A549 (cell line): ENCODE measurements at regions of chr11 and their contacts with region 1.

Region 1: DNA sequence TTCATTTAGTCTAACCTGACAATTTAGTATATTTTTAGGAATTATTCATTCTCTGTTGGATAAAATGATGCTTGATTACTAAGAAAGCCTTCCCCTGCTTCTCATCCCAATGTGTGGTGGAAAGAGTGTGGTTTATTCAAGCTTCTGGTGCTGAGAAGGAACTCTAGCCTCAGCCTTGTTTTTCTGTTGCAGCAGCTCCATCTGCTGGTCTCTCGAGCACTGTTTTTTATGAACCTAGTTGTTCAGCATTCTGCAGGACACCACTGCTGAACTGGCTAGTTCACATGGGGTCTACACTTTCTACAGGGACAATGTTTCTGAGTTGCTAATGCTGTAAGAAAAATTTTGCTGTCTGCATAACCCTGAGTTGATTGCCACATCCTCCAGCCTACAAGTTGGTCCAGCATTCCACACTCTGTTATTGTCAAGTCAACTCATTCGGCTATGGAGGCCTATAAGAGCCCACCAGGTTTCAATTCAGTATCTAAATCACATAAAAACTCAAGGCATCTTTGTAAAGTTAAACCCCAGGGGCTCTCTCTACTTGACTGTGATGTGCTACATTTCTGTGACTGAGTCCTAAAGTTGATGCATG is 14.3 kb downstream of the OR2AG2 start:
- DNase-seq: peak; percentile 35 to 58
- ATAC-seq: peak; percentile 91 to 94
- H3K4me3 ChIP-seq: no peak overlapping the region
- H3K27ac ChIP-seq: no peak overlapping the region
- H3K4me1 ChIP-seq: no peaks in the 10 kb centered on the region
- CTCF ChIP-seq: peak; percentile 62
- EP300 ChIP-seq: no peak
- POLR2A ChIP-seq: no peak
- RAD21 ChIP-seq: peak; percentile 56 to 72

Region 2: DNA sequence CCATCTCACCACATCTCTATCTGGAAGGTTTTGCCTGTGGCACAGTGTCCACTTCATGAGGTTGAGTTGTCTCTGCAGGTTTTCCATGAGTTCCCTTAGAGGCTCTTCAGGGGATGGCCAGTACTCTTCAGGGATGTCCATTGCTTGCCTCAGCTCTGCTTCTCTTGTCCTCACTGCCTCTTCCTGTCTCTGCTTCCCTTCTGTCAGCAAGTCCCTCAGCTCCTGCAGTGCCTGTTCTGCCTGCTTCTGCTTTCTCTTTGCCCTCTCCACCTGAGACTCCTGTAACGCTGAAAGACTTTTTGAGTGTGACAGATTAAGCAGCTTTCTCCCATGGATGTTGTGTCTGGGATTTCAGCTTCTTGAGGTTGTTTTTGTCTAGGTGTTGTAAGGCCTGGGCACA is 36.1 kb before region 1 on chr11:
- CTCF ChIA-PET with region 1: interaction called, 14 read pairs
- POLR2A ChIA-PET with region 1: no interaction called
- DNase-seq: no peak
- ATAC-seq: no peak
- H3K4me3 ChIP-seq: no peak overlapping the region
- H3K27ac ChIP-seq: no peak overlapping the region
- H3K4me1 ChIP-seq: no peaks in the 10 kb centered on the region
- CTCF ChIP-seq: no peak
- EP300 ChIP-seq: no peak
- POLR2A ChIP-seq: no peak
- RAD21 ChIP-seq: no peak

Region 3: DNA sequence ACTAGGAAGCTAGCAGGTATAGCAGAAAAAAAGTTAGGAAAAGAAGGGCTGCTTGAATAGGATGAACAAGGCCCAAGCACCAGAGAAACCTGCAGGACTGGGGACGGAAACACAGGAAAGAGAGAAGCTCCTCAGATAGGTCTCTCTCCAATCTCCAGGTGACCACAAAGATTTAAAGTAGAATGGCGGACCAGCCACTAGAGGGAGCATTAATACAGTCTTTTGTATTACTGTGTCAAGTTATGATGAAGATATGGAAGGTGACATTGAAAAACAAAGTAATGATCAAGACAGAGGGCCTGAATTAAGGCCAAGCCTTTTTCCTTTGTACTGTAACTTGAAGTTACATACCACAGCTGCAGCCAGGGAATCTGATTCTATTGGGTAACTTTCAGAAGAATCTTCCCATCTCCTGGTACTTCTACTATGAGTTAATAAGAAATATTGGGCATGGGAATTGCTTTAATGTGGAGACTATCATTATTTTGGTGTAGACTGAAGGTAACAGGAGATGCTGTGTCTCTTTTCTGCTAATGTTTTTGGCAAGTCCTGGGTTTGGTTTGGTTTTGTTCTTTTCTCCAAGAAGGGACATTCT is 19.5 kb before region 1 on chr11:
- CTCF ChIA-PET with region 1: interaction called, 28 read pairs
- POLR2A ChIA-PET with region 1: no interaction called
- DNase-seq: peak; percentile 36 to 45
- ATAC-seq: peak; percentile 84 to 93
- H3K4me3 ChIP-seq: no peak overlapping the region
- H3K27ac ChIP-seq: no peak overlapping the region
- H3K4me1 ChIP-seq: no peaks in the 10 kb centered on the region
- CTCF ChIP-seq: peak; percentile 61
- EP300 ChIP-seq: no peak
- POLR2A ChIP-seq: no peak
- RAD21 ChIP-seq: peak; percentile 29 to 39; a peak in 3 of 5 replicates

Region 4: GRCh38 chr11:6746086-6746618 is 11.3 kb before region 1 on chr11:
- CTCF ChIA-PET with region 1: interaction called, 41 read pairs
- POLR2A ChIA-PET with region 1: no interaction called
- DNase-seq: no peak
- ATAC-seq: no peak
- H3K4me3 ChIP-seq: no peak overlapping the region
- H3K27ac ChIP-seq: no peak overlapping the region
- H3K4me1 ChIP-seq: no peaks in the 10 kb centered on the region
- CTCF ChIP-seq: no peak
- EP300 ChIP-seq: no peak
- POLR2A ChIP-seq: no peak
- RAD21 ChIP-seq: no peak